CD8-positive, alpha-beta T cell (primary cell): ENCODE measurements at regions of chr3 and their contacts with region 1.

Region 1: GRCh38 chr3:68007621-68008226 is 353.3 kb upstream of the SUCLG2 start:
- DNase-seq: peak; percentile 3 to 69 (median 41)
- ATAC-seq: peak; percentile 79
- H3K4me3 ChIP-seq: peak overlapping the region; percentile 46 to 60
- H3K4me3 Mint-ChIP-seq: peak overlapping the region; percentile 90
- H3K27ac ChIP-seq: no peak overlapping the region
- H3K27ac Mint-ChIP-seq: peak overlapping the region; percentile 75
- H3K4me1 ChIP-seq: peaks cover 16% of the 10 kb centered on the region
- H3K4me1 Mint-ChIP-seq: peaks cover 19% of the 10 kb centered on the region
- H3K27me3 ChIP-seq: no peaks in the 10 kb centered on the region
- H3K27me3 Mint-ChIP-seq: peaks cover 32% of the 10 kb centered on the region
- CTCF ChIP-seq: peak; percentile 17

Region 2: GRCh38 chr3:67263866-67264265 is 743.9 kb before region 1 on chr3:
- CTCF ChIA-PET with region 1: no interaction called
- POLR2A ChIA-PET with region 1: no interaction called
- intact Hi-C with region 1: no loop called
- DNase-seq: no peak
- ATAC-seq: no peak
- H3K4me3 ChIP-seq: no peak overlapping the region
- H3K4me3 Mint-ChIP-seq: no peak overlapping the region
- H3K27ac ChIP-seq: no peak overlapping the region
- H3K27ac Mint-ChIP-seq: no peak overlapping the region
- H3K4me1 ChIP-seq: no peaks in the 10 kb centered on the region
- H3K4me1 Mint-ChIP-seq: no peaks in the 10 kb centered on the region
- H3K27me3 ChIP-seq: no peaks in the 10 kb centered on the region
- H3K27me3 Mint-ChIP-seq: peaks cover 2% of the 10 kb centered on the region
- CTCF ChIP-seq: no peak

Region 3: GRCh38 chr3:67947808-67948508 is 59.8 kb before region 1 on chr3:
- CTCF ChIA-PET with region 1: interaction called, 5 read pairs
- POLR2A ChIA-PET with region 1: interaction called, 3 read pairs
- intact Hi-C with region 1: loop called in 1 of 2 experiments (anchors 5 kb)
- DNase-seq: peak; percentile 50 to 89 (median 77)
- ATAC-seq: peak; percentile 95
- H3K4me3 ChIP-seq: peak overlapping the region; percentile 42 to 45
- H3K4me3 Mint-ChIP-seq: peak overlapping the region; percentile 84
- H3K27ac ChIP-seq: peak overlapping the region; percentile 2 to 32
- H3K27ac Mint-ChIP-seq: peak overlapping the region; percentile 92
- H3K4me1 ChIP-seq: peaks cover 20% of the 10 kb centered on the region
- H3K4me1 Mint-ChIP-seq: peaks cover 39% of the 10 kb centered on the region
- H3K27me3 ChIP-seq: no peaks in the 10 kb centered on the region
- H3K27me3 Mint-ChIP-seq: no peaks in the 10 kb centered on the region
- CTCF ChIP-seq: peak; percentile 18

Region 4: GRCh38 chr3:67983166-67983565 is 24.6 kb before region 1 on chr3:
- CTCF ChIA-PET with region 1: no interaction called
- POLR2A ChIA-PET with region 1: no interaction called
- intact Hi-C with region 1: no loop called
- DNase-seq: no peak
- ATAC-seq: no peak
- H3K4me3 ChIP-seq: no peak overlapping the region
- H3K4me3 Mint-ChIP-seq: no peak overlapping the region
- H3K27ac ChIP-seq: no peak overlapping the region
- H3K27ac Mint-ChIP-seq: no peak overlapping the region
- H3K4me1 ChIP-seq: no peaks in the 10 kb centered on the region
- H3K4me1 Mint-ChIP-seq: no peaks in the 10 kb centered on the region
- H3K27me3 ChIP-seq: no peaks in the 10 kb centered on the region
- H3K27me3 Mint-ChIP-seq: no peaks in the 10 kb centered on the region
- CTCF ChIP-seq: no peak

Region 5: GRCh38 chr3:68057637-68058320 is 50.1 kb after region 1 on chr3:
- CTCF ChIA-PET with region 1: interaction called, 4 read pairs
- POLR2A ChIA-PET with region 1: no interaction called
- intact Hi-C with region 1: loop called in 1 of 2 experiments (anchors 5 kb)
- DNase-seq: peak; percentile 33 to 91 (median 66)
- ATAC-seq: peak; percentile 98
- H3K4me3 ChIP-seq: peak overlapping the region in 1 of 2 experiments; percentile 38
- H3K4me3 Mint-ChIP-seq: peak overlapping the region; percentile 59
- H3K27ac ChIP-seq: peak overlapping the region; percentile 6 to 44
- H3K27ac Mint-ChIP-seq: peak overlapping the region; percentile 79
- H3K4me1 ChIP-seq: peaks cover 59% of the 10 kb centered on the region
- H3K4me1 Mint-ChIP-seq: peaks cover 75% of the 10 kb centered on the region
- H3K27me3 ChIP-seq: no peaks in the 10 kb centered on the region
- H3K27me3 Mint-ChIP-seq: no peaks in the 10 kb centered on the region
- CTCF ChIP-seq: no peak

Region 6: DNA sequence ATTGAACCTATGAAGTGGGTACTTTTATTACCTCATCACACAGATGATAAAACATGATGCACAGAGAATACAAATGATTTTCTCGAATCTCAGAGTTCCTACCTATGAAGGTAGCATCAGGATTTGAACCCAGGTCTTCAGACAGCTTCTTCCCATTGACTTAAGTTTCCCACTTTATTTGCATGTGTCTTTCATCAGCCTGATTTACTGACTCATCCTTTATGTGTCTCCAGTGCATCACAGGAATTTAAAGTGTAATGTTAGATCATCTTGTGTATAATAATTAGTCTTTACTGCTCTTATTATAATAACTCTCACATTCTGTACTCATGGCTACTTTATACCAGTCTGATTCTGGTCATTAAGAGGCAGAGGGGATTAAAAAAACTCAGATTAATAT is 96.1 kb after region 1 on chr3:
- CTCF ChIA-PET with region 1: no interaction called
- POLR2A ChIA-PET with region 1: no interaction called
- intact Hi-C with region 1: loop called in 1 of 2 experiments (anchors 5 kb)
- DNase-seq: no peak
- ATAC-seq: no peak
- H3K4me3 ChIP-seq: no peak overlapping the region
- H3K4me3 Mint-ChIP-seq: no peak overlapping the region
- H3K27ac ChIP-seq: no peak overlapping the region
- H3K27ac Mint-ChIP-seq: no peak overlapping the region
- H3K4me1 ChIP-seq: peaks cover 7% of the 10 kb centered on the region
- H3K4me1 Mint-ChIP-seq: peaks cover 10% of the 10 kb centered on the region
- H3K27me3 ChIP-seq: no peaks in the 10 kb centered on the region
- H3K27me3 Mint-ChIP-seq: no peaks in the 10 kb centered on the region
- CTCF ChIP-seq: no peak